ENCODE measurements at regions of chrX and their contacts with region 1.

Region 1: DNA sequence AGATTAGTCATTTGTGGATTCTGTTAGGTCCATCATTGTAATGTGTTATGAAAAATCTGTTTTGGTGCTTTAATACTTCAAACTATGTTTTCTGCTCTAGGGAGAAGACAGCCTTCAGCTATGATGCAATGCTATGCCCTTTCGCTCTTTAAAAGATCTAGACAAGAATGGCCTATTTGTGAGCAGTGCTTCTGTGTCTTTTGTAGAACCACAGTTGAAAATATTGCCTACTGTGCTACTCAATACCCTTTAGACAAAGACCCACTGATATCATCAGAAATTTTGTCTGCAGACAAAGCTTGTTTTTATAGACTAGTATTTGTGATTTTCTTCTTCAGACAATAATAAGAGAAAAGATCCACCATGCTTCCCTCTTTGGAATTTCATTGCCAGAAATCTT is 44.6 kb upstream of the SLITRK2 start:
- DNase-seq: no peak
- H3K4me3 ChIP-seq: no peak overlapping the region
- H3K27ac ChIP-seq: no peak overlapping the region
- H3K4me1 ChIP-seq: no peaks in the 10 kb centered on the region
- H3K27me3 ChIP-seq: peaks cover 0 to 2% of the 10 kb centered on the region in 2 donors
- CTCF ChIP-seq: no peak
- POLR2A ChIP-seq: no peak

Region 2: GRCh38 chrX:145630806-145631435 is 142.1 kb before region 1 on chrX:
- intact Hi-C with region 1: no loop called
- DNase-seq: no peak
- H3K4me3 ChIP-seq: no peak overlapping the region
- H3K27ac ChIP-seq: no peak overlapping the region
- H3K4me1 ChIP-seq: no peaks in the 10 kb centered on the region
- H3K27me3 ChIP-seq: no peaks in the 10 kb centered on the region
- CTCF ChIP-seq: no peak
- POLR2A ChIP-seq: no peak

Region 3: DNA sequence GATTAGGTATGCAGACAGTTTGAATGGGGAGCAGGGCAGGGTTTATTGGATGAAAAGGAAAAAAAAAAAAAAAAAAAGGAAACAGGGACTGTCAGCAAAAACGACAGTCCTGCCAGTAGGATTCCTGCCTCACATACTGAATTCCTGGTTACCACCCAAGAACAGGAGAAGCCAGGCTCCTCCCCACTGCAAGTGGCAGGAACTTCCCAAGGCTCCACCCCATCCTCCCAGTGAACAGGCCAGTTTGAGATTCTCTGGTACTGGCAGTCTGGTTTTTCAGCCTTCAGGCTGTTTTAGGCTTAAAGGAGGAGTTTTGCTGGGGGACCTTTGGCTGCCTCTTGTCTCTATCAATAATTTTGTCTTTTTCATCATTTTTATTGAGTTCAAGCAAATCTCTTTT is 1401.6 kb after region 1 on chrX:
- intact Hi-C with region 1: loop called (anchors 5 kb)
- DNase-seq: no peak
- H3K4me3 ChIP-seq: no peak overlapping the region
- H3K27ac ChIP-seq: no peak overlapping the region
- H3K4me1 ChIP-seq: no peaks in the 10 kb centered on the region
- H3K27me3 ChIP-seq: no peaks in the 10 kb centered on the region
- CTCF ChIP-seq: no peak
- POLR2A ChIP-seq: no peak